Activated CD4-positive, alpha-beta T cell treated with anti-CD3 and anti-CD28 coated beads for 36 hours (primary cell): ENCODE measurements at regions of chr1 and their contacts with region 1.

Region 1: DNA sequence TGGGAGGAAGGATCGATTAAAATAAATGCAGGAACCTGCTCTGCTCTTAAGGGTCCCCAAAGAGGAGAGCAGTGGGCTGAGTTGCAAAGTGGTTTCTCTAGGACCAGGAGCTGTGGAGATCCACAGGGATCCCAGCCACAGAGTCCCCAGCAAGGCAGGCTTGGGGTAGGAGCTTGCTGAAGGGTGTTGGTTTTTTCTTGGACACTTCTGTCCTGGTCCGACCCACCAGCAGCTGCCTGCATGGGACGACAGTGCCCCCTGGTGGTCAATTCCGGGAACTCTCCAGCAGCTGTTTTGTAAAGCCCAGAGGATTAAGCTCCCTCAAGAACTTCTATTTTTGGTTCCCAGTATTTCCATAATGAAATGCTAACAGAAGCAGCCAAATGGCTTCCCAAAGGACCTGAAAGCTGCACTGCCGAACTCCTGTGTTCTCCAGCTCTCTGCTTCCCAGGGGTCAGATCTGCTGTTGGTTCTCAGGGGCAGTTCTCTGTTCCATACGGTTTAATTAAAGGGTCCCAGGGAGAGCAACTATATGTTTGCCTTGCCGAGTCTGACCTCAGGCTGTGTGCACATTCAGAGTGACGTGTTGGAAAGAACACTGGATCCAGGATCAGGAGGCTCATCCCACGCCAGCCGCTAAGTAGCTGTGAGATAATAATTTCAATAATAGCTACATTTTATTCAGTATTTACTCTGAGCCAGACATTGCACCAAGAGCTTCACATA is 23.2 kb downstream of the NENF start:
- DNase-seq: peak; percentile 91
- ATAC-seq: peak; percentile 77
- H3K4me3 Mint-ChIP-seq: no peak overlapping the region
- H3K27ac Mint-ChIP-seq: no peak overlapping the region
- H3K4me1 Mint-ChIP-seq: peaks cover 7% of the 10 kb centered on the region
- H3K27me3 Mint-ChIP-seq: no peaks in the 10 kb centered on the region

Region 2: DNA sequence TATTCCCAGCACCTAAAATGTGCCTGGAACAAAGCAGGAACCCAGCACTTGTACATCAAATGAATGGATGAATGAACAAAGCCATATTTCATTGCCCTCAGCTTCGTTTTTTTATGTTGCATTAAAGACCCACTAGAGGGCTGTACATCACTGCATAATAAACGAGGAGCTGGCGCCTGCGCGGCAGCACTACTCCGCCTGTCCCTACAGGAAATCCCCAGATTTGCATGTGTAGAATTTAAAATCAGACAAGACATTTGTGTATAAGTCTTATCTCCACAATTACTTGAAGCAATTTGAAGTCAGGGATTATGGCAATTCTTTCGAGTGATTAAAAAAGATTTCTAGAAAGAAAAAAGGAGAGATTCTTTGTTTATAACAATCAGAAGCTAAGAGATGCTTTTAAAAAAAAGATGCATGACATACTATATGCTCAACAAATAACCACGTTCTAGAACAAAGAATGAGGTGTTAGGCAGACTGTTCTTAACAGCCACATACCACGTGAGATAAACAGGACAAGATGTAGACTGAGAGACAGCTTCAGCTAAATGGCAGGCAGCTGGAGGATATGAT is 775.1 kb before region 1 on chr1:
- CTCF ChIA-PET with region 1: interaction called, 63 read pairs
- POLR2A ChIA-PET with region 1: interaction called, 3 read pairs
- intact Hi-C with region 1: loop called (anchors 1 to 2 kb)
- DNase-seq: peak; percentile 85
- ATAC-seq: peak; percentile 94
- H3K4me3 Mint-ChIP-seq: no peak overlapping the region
- H3K27ac Mint-ChIP-seq: peak overlapping the region; percentile 71
- H3K4me1 Mint-ChIP-seq: peaks cover 7% of the 10 kb centered on the region
- H3K27me3 Mint-ChIP-seq: no peaks in the 10 kb centered on the region

Region 3: DNA sequence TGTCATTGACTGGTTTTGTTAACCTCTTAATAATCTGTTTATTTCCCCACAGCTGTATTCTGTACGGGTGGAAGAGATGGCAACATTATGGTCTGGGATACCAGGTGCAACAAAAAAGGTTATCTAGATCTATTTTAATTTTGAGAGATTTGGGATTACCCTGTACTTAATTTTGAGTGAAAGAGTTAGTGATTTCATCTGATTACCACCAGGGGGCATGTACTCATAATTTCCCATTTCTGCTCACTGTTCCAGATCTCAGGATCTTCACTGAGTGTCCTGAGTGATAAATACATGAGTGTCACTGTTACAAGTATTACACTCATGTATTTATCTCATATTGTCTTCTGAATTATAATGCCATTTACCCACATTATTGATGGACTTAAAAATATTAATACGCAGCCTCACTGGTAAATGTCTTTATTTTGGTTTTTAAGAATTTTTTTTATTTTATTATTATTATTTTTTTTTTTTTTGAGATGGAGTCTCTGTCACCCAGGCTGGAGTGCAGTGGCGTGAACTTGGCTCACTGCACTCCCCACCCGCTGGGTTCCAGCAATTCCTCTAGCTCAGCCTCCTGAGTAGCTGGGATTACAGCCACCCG is 393.0 kb before region 1 on chr1:
- CTCF ChIA-PET with region 1: interaction called, 50 read pairs
- POLR2A ChIA-PET with region 1: interaction called, 3 read pairs
- intact Hi-C with region 1: loop called (anchors 2 kb)
- DNase-seq: no peak
- ATAC-seq: no peak
- H3K4me3 Mint-ChIP-seq: no peak overlapping the region
- H3K27ac Mint-ChIP-seq: no peak overlapping the region
- H3K4me1 Mint-ChIP-seq: no peaks in the 10 kb centered on the region
- H3K27me3 Mint-ChIP-seq: no peaks in the 10 kb centered on the region

Region 4: GRCh38 chr1:212368073-212368484 is 87.9 kb before region 1 on chr1:
- CTCF ChIA-PET with region 1: interaction called, 64 read pairs
- POLR2A ChIA-PET with region 1: no interaction called
- intact Hi-C with region 1: loop called (anchors 1 to 10 kb)
- DNase-seq: peak; percentile 67
- ATAC-seq: peak; percentile 98
- H3K4me3 Mint-ChIP-seq: no peak overlapping the region
- H3K27ac Mint-ChIP-seq: no peak overlapping the region
- H3K4me1 Mint-ChIP-seq: no peaks in the 10 kb centered on the region
- H3K27me3 Mint-ChIP-seq: no peaks in the 10 kb centered on the region

Region 5: GRCh38 chr1:212432706-212433576 is 23.0 kb before region 1 on chr1 and contains the start of gene NENF:
- CTCF ChIA-PET with region 1: interaction called, 26 read pairs
- POLR2A ChIA-PET with region 1: interaction called, 3 read pairs
- intact Hi-C with region 1: no loop called
- DNase-seq: peak; percentile 88
- ATAC-seq: peak; percentile 99
- H3K4me3 Mint-ChIP-seq: peak within 1 kb of the TSS; percentile 75
- H3K27ac Mint-ChIP-seq: peak within 1 kb of the TSS; percentile 56
- H3K4me1 Mint-ChIP-seq: peaks cover 39% of the 10 kb centered on the region
- H3K27me3 Mint-ChIP-seq: no peaks in the 10 kb centered on the region
- total RNA-seq, gene NENF: 30.8 to 34.1 TPM

Region 6: DNA sequence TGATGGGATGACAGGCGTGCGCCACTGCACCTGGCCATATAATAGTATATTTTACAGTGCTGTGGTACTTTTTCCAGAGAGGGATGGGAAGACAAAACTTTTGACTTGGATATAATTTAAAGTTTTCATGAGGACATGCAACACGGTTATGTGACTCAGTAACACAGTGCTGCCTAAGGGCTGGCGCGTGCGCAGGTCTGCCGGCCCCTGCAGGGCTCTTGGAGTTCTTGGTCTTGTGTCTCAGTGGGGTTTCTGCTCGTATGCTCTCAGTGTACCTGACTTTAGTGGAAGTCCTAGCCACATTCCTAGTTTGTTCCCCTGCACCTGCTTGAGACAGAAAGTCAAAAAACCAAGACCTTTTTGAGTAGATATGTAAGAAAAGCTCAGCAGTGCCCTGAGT is 125.1 kb after region 1 on chr1:
- CTCF ChIA-PET with region 1: no interaction called
- POLR2A ChIA-PET with region 1: no interaction called
- intact Hi-C with region 1: no loop called
- DNase-seq: no peak
- ATAC-seq: no peak
- H3K4me3 Mint-ChIP-seq: no peak overlapping the region
- H3K27ac Mint-ChIP-seq: no peak overlapping the region
- H3K4me1 Mint-ChIP-seq: no peaks in the 10 kb centered on the region
- H3K27me3 Mint-ChIP-seq: peaks cover 17% of the 10 kb centered on the region

Region 7: GRCh38 chr1:212651521-212651920 is 195.6 kb after region 1 on chr1:
- CTCF ChIA-PET with region 1: interaction called, 10 read pairs
- POLR2A ChIA-PET with region 1: no interaction called
- intact Hi-C with region 1: no loop called
- DNase-seq: no peak
- ATAC-seq: no peak
- H3K4me3 Mint-ChIP-seq: no peak overlapping the region
- H3K27ac Mint-ChIP-seq: no peak overlapping the region
- H3K4me1 Mint-ChIP-seq: no peaks in the 10 kb centered on the region
- H3K27me3 Mint-ChIP-seq: peaks cover 9% of the 10 kb centered on the region

Region 8: DNA sequence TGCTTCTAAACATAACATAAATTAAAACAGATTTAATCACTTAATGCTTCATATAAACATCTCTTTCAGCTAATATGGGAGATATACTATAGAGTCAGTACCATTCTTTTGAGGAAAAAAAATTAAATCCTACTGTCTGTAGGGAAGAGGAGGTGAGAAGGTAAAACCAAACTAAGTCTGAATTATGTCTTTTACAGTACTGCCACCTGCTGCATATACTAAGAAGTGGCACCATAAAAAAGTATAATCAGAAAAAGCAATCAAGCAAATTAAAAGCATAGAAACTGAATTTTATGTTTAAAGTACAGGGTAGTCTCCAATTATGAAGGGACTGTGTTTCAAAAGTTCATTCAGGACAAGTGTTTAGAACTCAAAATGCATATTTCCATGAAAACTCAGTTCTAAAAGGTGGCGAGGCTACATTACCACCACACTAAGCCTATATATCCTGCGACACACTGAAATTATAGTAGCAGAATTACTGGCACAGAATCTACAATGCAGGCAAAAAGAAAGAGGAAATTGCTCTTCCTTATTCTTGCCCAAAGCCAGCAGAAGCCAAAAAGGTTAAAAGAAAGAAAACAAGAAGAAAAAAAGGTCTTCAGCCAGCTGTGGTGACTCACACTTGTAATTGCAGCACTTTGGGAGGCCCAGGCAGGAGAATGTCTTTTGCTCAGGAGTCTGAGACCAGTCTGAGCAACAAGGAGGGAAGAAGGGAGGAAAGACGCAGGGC is 326.6 kb after region 1 on chr1:
- CTCF ChIA-PET with region 1: interaction called, 25 read pairs
- POLR2A ChIA-PET with region 1: no interaction called
- intact Hi-C with region 1: loop called (anchors 1 to 5 kb)
- DNase-seq: no peak
- ATAC-seq: peak; percentile 73
- H3K4me3 Mint-ChIP-seq: no peak overlapping the region
- H3K27ac Mint-ChIP-seq: no peak overlapping the region
- H3K4me1 Mint-ChIP-seq: peaks cover 27% of the 10 kb centered on the region
- H3K27me3 Mint-ChIP-seq: no peaks in the 10 kb centered on the region